Activated B cell treated with CpG ODN at 0.5 μM for 24 hours (primary cell): ENCODE measurements at regions of chr10 and their contacts with region 1.

Region 1: DNA sequence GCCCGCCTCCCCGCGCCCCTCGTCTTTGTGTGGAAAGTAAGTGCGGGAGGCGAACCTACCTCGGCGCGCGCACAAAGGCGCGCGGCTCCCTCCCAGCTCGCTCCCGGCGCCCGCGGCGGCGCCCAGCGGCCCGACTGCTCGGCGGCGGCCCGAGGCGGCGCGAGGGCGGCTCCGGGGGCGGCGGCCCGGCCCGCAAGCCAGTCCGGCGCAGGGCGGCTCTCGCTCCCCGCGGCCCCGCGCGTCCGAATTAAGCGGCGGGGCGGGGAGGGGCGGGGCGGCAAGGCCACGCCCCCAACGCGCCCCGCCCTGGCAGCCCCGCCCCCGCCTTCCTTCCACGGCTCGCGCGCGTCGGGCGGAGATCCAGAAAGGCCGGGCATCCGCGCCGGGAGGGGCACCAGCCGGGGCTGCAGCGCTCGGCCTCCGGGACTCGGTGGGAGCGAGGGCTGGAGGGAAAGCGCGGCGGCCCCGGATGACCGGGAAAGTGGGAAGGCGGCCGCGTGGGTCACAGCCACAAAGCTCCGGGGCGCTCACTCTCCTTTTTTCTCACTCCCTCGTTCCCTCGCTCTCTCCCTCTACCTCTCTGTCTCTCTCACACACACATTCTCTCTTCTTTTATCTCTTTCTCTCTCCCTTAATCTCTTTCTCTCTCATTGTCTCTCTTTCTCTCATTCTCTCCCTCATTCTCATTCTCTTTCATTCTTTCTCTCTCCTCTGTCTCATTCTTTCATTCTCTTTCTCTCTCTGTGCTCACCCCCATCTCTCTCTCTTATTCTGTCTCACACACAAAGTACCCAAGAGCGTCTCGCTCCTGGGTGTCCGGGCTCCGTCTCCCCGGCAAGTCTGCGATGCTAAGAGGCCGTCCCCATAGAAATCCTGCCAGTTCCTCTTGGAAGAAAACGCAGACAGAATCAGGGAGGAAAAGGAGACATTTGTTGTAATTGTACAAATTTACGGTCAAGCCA is 170.2 kb downstream of the FAM107B start:
- DNase-seq: peak; percentile 72
- ATAC-seq: peak; percentile 55
- H3K4me3 Mint-ChIP-seq: peak overlapping the region; percentile 86
- H3K27ac Mint-ChIP-seq: peak overlapping the region; percentile 94
- H3K4me1 Mint-ChIP-seq: peaks cover 68% of the 10 kb centered on the region
- H3K27me3 Mint-ChIP-seq: no peaks in the 10 kb centered on the region
- CTCF ChIP-seq: no peak

Region 2: DNA sequence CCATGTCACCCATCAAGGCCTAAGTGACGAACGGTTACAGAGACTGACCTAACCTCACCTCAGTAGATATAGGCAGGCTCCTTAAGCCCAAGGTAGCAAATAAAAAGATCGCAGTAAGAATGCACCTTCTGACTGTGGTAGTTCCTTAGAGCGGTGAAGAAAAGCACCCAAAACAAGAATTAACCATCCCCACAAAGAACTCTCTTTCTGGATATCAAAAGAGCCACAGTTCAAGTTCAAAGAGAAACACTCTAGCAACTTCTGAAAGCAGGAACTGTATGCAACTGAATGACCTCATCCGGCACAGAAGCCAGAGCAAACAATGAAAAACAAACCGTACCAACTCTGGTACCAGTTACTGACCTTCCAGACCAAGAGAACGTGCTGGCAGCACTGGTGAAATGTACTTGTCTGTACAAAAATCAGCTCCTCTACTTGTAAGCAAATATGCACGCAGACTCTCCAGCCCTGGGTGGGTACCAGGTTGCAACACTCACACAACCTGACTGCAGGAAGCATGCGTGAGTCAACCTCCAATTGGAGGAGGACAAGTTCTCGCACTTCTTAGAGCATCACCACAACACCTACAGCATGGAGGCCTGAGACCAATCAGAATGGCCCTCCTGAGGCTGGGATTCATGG is 32.5 kb before region 1 on chr10:
- CTCF ChIA-PET with region 1: no interaction called
- POLR2A ChIA-PET with region 1: no interaction called
- intact Hi-C with region 1: no loop called
- DNase-seq: no peak
- ATAC-seq: peak; percentile 78
- H3K4me3 Mint-ChIP-seq: peak overlapping the region; percentile 50
- H3K27ac Mint-ChIP-seq: peak overlapping the region; percentile 70
- H3K4me1 Mint-ChIP-seq: peaks cover 88% of the 10 kb centered on the region
- H3K27me3 Mint-ChIP-seq: no peaks in the 10 kb centered on the region
- CTCF ChIP-seq: no peak

Region 3: GRCh38 chr10:14588084-14588937 is 16.2 kb before region 1 on chr10:
- CTCF ChIA-PET with region 1: no interaction called
- POLR2A ChIA-PET with region 1: interaction called, 3 read pairs
- intact Hi-C with region 1: loop called (anchors 1 kb)
- DNase-seq: no peak
- ATAC-seq: peak; percentile 61
- H3K4me3 Mint-ChIP-seq: peak overlapping the region; percentile 65
- H3K27ac Mint-ChIP-seq: peak overlapping the region; percentile 89
- H3K4me1 Mint-ChIP-seq: peaks cover 92% of the 10 kb centered on the region
- H3K27me3 Mint-ChIP-seq: no peaks in the 10 kb centered on the region
- CTCF ChIP-seq: no peak

Region 4: DNA sequence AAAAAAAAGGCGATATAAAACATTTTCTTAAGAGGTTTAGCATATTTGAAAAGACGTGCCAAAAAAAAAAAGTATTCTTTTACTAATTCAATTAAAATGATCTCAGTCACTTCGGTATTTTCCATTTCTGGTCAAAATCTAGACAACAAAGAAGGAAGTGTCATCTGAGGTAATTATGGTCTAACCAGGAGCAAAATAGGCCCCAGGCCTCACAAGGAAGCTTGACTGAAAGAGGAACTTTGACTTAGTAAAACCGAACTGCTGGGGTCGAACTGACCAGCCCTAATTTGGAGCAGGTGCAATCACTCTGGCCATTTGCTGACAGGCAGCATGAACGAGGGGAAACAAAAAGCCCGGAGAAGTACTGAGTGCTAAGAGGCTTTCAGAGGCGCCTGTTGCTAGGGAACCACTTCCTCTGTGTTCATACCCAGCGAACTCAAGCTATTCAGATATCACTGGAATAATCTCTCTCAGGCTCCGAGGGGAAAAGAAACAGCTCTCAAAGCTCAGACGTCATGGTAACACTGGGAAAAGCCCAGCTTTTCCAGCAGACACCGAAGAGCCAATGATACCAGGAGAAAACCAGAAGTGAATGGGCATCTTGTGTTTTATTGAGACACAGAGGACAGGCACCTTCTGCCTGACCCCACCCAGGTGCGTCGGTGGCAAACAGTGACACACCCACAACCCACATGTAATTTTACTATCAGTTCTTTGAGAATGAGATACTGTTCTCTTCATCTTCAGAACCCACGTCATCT is 43.7 kb after region 1 on chr10:
- CTCF ChIA-PET with region 1: no interaction called
- POLR2A ChIA-PET with region 1: interaction called, 18 read pairs
- intact Hi-C with region 1: loop called (anchors 1 kb)
- DNase-seq: peak; percentile 56
- ATAC-seq: peak; percentile 79
- H3K4me3 Mint-ChIP-seq: peak overlapping the region; percentile 75
- H3K27ac Mint-ChIP-seq: peak overlapping the region; percentile 98
- H3K4me1 Mint-ChIP-seq: peaks cover 80% of the 10 kb centered on the region
- H3K27me3 Mint-ChIP-seq: no peaks in the 10 kb centered on the region
- CTCF ChIP-seq: no peak

Region 5: GRCh38 chr10:14751014-14751896 is 146.8 kb after region 1 on chr10:
- CTCF ChIA-PET with region 1: no interaction called
- POLR2A ChIA-PET with region 1: interaction called, 12 read pairs
- intact Hi-C with region 1: loop called (anchors 1 kb)
- DNase-seq: peak; percentile 60
- ATAC-seq: peak; percentile 78
- H3K4me3 Mint-ChIP-seq: peak overlapping the region; percentile 70
- H3K27ac Mint-ChIP-seq: peak overlapping the region; percentile 97
- H3K4me1 Mint-ChIP-seq: peaks cover 71% of the 10 kb centered on the region
- H3K27me3 Mint-ChIP-seq: no peaks in the 10 kb centered on the region
- CTCF ChIP-seq: no peak

Region 6: DNA sequence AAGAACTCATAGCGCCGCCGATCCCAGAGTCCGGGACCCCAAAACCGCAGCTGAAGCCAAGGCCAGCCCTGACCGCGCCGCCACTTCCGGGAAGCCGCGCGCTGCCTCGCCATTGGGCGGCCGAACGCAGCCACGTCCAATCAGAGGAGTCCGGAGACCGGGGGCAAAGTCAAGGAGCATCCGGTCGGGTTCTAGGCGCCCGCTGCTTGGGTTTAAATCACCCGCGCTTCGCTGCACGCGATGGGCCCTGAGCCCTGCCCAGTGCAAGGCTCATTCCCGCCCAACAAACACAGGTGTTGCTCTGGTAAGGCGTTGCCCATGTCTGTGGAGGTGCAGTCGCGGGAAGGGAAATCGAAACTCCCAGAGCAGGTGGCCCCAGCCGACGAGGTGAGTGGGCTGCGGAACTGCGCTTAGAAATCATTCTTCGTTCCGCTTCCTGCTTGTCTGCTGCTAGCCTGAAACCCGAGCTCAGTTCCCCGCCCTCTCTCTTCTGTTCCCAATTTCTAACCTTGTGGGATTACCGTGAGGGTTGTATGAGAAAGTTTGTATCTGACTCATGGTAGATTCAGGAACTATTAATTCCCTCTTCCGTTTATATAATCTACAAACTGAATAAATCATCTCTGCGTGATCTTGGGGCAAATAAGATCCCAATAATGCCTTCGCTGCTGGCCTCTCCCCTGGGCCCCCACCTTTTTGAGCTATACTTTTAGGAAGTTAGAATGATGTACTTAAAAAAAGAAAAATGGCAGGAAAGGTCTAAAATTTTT is 349.7 kb after region 1 on chr10 and contains the start of gene DCLRE1C:
- CTCF ChIA-PET with region 1: no interaction called
- POLR2A ChIA-PET with region 1: interaction called, 10 read pairs
- intact Hi-C with region 1: loop called (anchors 2 kb)
- DNase-seq: peak; percentile 77
- ATAC-seq: peak; percentile 78
- H3K4me3 Mint-ChIP-seq: peak within 1 kb of the TSS; percentile 90
- H3K27ac Mint-ChIP-seq: peak within 1 kb of the TSS; percentile 96
- H3K4me1 Mint-ChIP-seq: peaks cover 56% of the 10 kb centered on the region
- H3K27me3 Mint-ChIP-seq: no peaks in the 10 kb centered on the region
- CTCF ChIP-seq: no peak
- total RNA-seq, gene DCLRE1C: 38.0 and 43.8 TPM in 2 replicates